Activated CD4-positive, alpha-beta T cell treated with anti-CD3 and anti-CD28 coated beads, Interleukin-2, amount 10 ng/mL, durations not matched to agents 24 days and 14 days (primary cell): ENCODE measurements at regions of chr17 and their contacts with region 1.

Region 1: DNA sequence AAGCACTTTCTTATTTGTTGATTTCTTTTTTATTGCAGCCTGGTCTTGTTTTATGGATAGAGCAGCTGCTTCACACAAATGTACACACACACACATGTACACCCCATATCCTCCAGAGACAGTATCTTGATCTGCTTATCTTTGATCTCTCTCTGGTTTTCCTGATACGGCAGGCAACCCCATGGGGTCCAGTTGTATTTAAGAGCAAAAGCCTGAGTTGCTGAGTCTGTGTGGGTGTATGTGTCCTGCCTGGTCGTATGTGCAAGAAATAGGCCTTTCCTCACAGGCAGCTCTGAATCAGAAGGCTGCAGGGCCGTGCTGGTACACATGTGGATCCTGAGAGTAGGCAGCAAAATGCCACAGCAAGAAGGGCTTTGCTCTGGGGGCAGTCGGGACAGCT is 14.6 kb upstream of the LGALS9 start:
- DNase-seq: peak; percentile 65
- H3K4me3 Mint-ChIP-seq: peak overlapping the region; percentile 52
- H3K27ac Mint-ChIP-seq: peak overlapping the region; percentile 79
- H3K4me1 Mint-ChIP-seq: peaks cover 51% of the 10 kb centered on the region
- H3K27me3 Mint-ChIP-seq: no peaks in the 10 kb centered on the region

Region 2: GRCh38 chr17:27630607-27631410 is 14.4 kb after region 1 on chr17 and contains the start of gene LGALS9:
- intact Hi-C with region 1: loop called (anchors 2 kb)
- DNase-seq: peak; percentile 87
- H3K4me3 Mint-ChIP-seq: peak within 1 kb of the TSS; percentile 87
- H3K27ac Mint-ChIP-seq: peak within 1 kb of the TSS; percentile 88
- H3K4me1 Mint-ChIP-seq: peaks cover 58% of the 10 kb centered on the region
- H3K27me3 Mint-ChIP-seq: no peaks in the 10 kb centered on the region
- total RNA-seq, gene LGALS9: 46.4 and 51.6 TPM in 2 replicates